Heart left ventricle (tissue), 16 donors: ENCODE measurements at regions of chr2 and their contacts with region 1.

Region 1: GRCh38 chr2:22442051-22442450 is 942.9 kb upstream of the KLHL29 start:
- DNase-seq: no peak
- ATAC-seq: no peak
- H3K4me3 ChIP-seq: no peak overlapping the region
- H3K27ac ChIP-seq: no peak overlapping the region
- H3K4me1 ChIP-seq: no peaks in the 10 kb centered on the region
- H3K27me3 ChIP-seq: no peaks in the 10 kb centered on the region
- CTCF ChIP-seq: no peak
- POLR2A ChIP-seq: no peak

Region 2: DNA sequence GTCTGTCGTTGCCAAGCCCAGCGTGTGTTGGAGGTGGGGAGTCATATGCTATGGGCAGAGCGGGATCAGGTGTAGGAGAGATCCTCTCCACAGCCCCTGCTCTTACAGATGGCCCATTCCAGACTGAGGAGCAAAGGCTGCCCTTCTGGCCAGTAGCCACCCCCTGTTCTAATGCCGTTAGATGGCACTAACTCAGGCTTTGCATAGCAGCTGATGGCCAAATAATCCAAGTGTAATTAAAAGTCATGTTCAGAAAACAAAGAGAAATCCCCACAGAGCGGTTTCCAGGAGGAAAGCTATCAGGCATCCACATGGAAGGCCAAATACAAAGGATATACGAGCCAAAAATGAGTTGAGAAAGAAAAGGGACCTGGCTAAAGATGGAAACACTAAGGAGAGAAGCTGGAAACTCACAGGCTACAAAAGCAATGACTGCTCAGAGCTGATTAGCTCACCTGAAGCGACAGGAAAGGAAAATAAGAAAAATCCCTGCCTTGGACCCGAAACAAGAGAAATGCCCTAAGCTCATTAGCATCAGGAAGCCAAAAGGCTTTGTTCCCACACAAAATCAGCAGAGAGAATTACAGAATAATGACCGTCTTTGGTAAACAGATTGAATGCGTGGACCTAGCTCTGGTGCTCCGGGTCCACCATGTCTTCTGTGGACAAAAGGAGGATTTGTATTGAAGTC is 59.4 kb before region 1 on chr2:
- intact Hi-C with region 1: loop called in 1 of 10 experiments (anchors 5 kb)
- DNase-seq: no peak
- ATAC-seq: no peak
- H3K4me3 ChIP-seq: no peak overlapping the region
- H3K27ac ChIP-seq: no peak overlapping the region
- H3K4me1 ChIP-seq: no peaks in the 10 kb centered on the region
- H3K27me3 ChIP-seq: peaks cover 0 to 4% (median 0%) of the 10 kb centered on the region in 9 donors
- CTCF ChIP-seq: no peak
- POLR2A ChIP-seq: no peak